K562 (cell line): ENCODE measurements at regions of chr3 and their contacts with region 1.

Region 1: GRCh38 chr3:13895155-13896105 is 15.6 kb upstream of the WNT7A start:
- DNase-seq: peak; percentile 92 to 96 (median 94)
- ATAC-seq: peak; percentile 99
- H3K4me3 ChIP-seq: peak overlapping the region; percentile 42
- H3K27ac ChIP-seq: no peak overlapping the region; the same call in 1 of the 3 replicates
- H3K4me1 ChIP-seq: peaks cover 16 to 25% of the 10 kb centered on the region in 2 experiments
- H3K27me3 ChIP-seq: peaks cover 0 to 7% of the 10 kb centered on the region in 2 experiments; a peak in 3 of 5 replicates
- CTCF ChIP-seq: no peak
- EP300 ChIP-seq: no peak
- POLR2A ChIP-seq: peak; percentile 66
- RAD21 ChIP-seq: no peak

Region 2: DNA sequence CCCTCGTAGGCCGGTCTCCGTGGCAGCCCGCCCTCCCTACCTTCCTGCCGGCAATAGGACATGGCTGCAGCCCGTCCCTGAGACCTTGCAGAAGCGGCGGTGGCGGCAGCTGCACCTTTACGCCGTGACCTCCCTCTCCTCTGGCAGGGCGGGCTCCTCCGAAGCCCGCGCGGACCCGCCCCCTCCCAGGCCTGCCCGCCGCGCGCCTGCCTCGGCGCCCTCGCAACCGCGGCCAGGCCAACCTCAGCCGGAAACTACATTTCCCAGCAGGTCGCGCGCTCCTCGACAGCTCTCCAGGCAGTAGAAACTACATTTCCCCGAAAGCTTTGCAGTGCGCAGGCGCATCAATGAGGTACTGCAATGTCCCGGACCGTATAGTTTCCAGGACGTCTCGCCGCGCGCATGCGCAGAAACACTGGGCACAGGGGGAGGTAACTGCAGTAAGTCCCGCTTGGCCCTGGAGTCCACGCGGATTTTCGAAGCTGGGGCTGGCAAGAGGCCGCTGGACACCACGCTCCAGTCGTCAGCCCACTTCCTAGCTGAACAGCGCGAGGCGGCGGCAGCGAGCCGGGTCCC is 229.3 kb after region 1 on chr3 and contains the starts of genes CHCHD4 and TMEM43:
- CTCF ChIA-PET with region 1: no interaction called
- POLR2A ChIA-PET with region 1: interaction called, 3 read pairs
- in situ Hi-C with region 1: loop called (anchors 5 kb)
- intact Hi-C with region 1: loop called (anchors 1 kb)
- DNase-seq: peak; percentile 98 to 100 (median 99)
- ATAC-seq: peak; percentile 83
- H3K4me3 ChIP-seq: peak within 1 kb of the TSS; percentile 72
- H3K27ac ChIP-seq: peak within 1 kb of the TSS; percentile 86
- H3K4me1 ChIP-seq: peaks cover 35 to 45% of the 10 kb centered on the region in 2 experiments
- H3K27me3 ChIP-seq: no peaks in the 10 kb centered on the region
- CTCF ChIP-seq: no peak
- EP300 ChIP-seq: peak; percentile 8; the same call in 1 of the 2 replicates
- POLR2A ChIP-seq: peak; percentile 79
- RAD21 ChIP-seq: no peak
- polyA plus RNA-seq, gene CHCHD4: 152 to 225 TPM
- polyA plus RNA-seq, gene TMEM43: 16.7 to 29.4 TPM

Region 3: GRCh38 chr3:14261229-14261628 is 365.8 kb after region 1 on chr3:
- CTCF ChIA-PET with region 1: no interaction called
- POLR2A ChIA-PET with region 1: no interaction called
- in situ Hi-C with region 1: no loop called
- intact Hi-C with region 1: loop called (anchors 10 kb)
- DNase-seq: peak; percentile 92 to 96 (median 94)
- ATAC-seq: peak; percentile 90
- H3K4me3 ChIP-seq: no peak overlapping the region
- H3K27ac ChIP-seq: no peak overlapping the region
- H3K4me1 ChIP-seq: peaks cover 20 to 25% of the 10 kb centered on the region in 2 experiments
- H3K27me3 ChIP-seq: no peaks in the 10 kb centered on the region
- CTCF ChIP-seq: peak; percentile 96 to 99 (median 99)
- EP300 ChIP-seq: peak; percentile 46; the same call in 1 of the 2 replicates
- POLR2A ChIP-seq: no peak
- RAD21 ChIP-seq: peak; percentile 99

Region 4: DNA sequence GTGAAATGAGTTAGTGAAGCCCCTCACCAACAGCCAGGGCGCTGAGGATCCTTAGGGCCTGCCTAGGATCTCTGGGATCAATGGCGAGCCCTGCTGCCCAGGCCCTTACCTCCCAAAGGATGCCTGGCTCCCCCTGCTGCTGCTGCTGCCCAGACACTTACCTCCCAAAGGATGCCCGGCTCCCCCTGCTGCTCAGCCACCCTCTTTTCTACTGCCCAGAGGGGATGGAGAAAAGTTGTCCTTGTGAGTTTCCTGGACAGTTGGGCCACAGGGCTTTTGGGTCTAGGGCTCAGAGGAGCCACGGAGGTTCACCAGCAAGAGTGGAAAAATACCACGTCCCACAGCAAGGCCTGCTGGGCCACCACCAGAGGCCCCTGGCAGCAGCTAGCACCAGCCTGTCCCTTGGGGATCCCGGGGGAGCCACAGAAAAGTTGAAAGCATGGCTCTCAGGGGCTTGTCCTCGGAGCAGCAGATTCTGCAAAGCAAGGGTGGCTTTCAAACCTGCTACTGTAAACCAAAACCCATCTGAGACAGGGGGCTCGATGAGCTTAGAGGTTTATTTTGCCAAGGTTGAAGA is 566.4 kb after region 1 on chr3:
- CTCF ChIA-PET with region 1: interaction called, 13 read pairs
- POLR2A ChIA-PET with region 1: no interaction called
- in situ Hi-C with region 1: no loop called
- intact Hi-C with region 1: loop called (anchors 10 kb)
- DNase-seq: peak in 3 of 4 experiments; percentile 41 to 51 (median 42)
- ATAC-seq: peak; percentile 65
- H3K4me3 ChIP-seq: no peak overlapping the region
- H3K27ac ChIP-seq: no peak overlapping the region
- H3K4me1 ChIP-seq: peaks cover 9 to 12% of the 10 kb centered on the region in 2 experiments; a peak in 3 of 5 replicates
- H3K27me3 ChIP-seq: no peaks in the 10 kb centered on the region
- CTCF ChIP-seq: peak; percentile 73 to 98 (median 97)
- EP300 ChIP-seq: no peak
- POLR2A ChIP-seq: no peak
- RAD21 ChIP-seq: peak; percentile 88 to 93

Region 5: GRCh38 chr3:14548321-14548729 is 652.9 kb after region 1 on chr3:
- CTCF ChIA-PET with region 1: interaction called, 3 read pairs
- POLR2A ChIA-PET with region 1: interaction called, 4 read pairs
- in situ Hi-C with region 1: no loop called
- intact Hi-C with region 1: loop called (anchors 1 kb)
- DNase-seq: peak; percentile 74 to 78 (median 77)
- ATAC-seq: peak; percentile 96
- H3K4me3 ChIP-seq: no peak overlapping the region
- H3K27ac ChIP-seq: no peak overlapping the region
- H3K4me1 ChIP-seq: peaks cover 0 to 16% of the 10 kb centered on the region in 2 experiments; a peak in 2 of 5 replicates
- H3K27me3 ChIP-seq: peaks cover 12 to 74% of the 10 kb centered on the region in 2 experiments; a peak in 4 of 5 replicates
- CTCF ChIP-seq: peak; percentile 85 to 90 (median 90)
- EP300 ChIP-seq: no peak
- POLR2A ChIP-seq: no peak
- RAD21 ChIP-seq: peak; percentile 69 to 91